ENCODE measurements at regions of chr19 and their contacts with region 1.

Region 1: DNA sequence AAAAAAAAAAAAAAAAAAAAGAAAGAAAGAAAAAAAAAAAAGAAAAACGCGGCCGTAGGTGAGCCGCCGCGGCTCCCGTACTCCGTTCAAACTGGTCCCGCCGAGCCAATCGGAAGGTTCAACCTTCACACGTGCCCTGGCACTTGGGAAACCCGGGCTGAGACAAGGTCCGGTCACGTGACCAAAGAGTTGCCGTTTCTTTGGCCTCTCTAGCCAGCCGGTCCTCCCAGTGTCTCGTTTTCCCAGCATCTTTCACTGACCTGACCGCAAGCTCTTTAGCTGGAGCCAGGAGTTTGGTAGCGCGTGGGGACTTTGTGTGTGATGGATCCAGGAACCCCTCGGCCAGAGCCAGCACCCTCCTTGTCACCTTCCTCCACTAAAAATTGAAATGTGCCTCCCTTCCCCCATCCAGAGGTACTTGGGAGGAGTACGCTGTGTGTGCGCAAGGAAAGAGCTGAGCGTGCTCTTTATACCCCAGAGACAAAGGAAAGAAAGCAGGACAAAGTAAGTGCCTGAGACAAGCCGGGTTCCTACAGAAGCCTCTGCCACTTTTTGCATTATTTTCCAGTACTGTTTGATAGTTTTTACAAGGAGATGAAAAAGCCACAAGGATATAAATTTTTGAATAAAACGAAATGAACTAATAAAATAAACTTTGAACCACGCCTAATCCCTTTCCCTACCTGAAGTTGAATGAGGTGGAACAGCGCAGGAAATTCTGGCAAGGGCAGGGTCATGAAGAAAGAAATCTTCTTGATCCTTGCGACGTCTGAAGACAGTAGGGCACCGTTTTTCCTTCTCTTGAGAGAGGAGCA is 959 bp downstream of the TNPO2 start:
- DNase-seq: peak; percentile 95
- H3K4me3 Mint-ChIP-seq: peak overlapping the region; percentile 92
- H3K27ac Mint-ChIP-seq: peak overlapping the region; percentile 85
- H3K4me1 Mint-ChIP-seq: peaks cover 41% of the 10 kb centered on the region
- H3K27me3 Mint-ChIP-seq: no peaks in the 10 kb centered on the region

Region 2: DNA sequence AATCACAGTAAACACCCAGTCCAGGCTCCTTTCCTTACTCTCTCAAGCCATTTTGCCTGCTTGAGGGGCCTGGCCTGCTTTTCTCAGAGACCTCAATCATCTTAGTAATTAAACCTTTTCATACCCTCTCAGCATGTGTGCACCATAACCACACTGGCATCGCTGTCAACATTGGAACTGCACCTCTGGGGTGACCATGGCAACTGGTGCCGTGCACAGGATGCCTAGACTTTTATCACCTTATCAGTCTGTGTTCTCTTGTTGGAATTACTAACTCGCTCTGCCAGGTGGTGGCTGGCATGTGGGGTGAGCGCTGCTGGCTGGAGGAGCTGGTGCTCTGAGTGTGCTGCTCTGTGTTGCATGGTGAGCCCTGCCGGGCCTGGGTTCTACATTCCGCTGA is 220.6 kb before region 1 on chr19:
- CTCF ChIA-PET with region 1: no interaction called
- POLR2A ChIA-PET with region 1: no interaction called
- DNase-seq: no peak
- H3K4me3 Mint-ChIP-seq: no peak overlapping the region
- H3K27ac Mint-ChIP-seq: no peak overlapping the region
- H3K4me1 Mint-ChIP-seq: no peaks in the 10 kb centered on the region
- H3K27me3 Mint-ChIP-seq: no peaks in the 10 kb centered on the region

Region 3: DNA sequence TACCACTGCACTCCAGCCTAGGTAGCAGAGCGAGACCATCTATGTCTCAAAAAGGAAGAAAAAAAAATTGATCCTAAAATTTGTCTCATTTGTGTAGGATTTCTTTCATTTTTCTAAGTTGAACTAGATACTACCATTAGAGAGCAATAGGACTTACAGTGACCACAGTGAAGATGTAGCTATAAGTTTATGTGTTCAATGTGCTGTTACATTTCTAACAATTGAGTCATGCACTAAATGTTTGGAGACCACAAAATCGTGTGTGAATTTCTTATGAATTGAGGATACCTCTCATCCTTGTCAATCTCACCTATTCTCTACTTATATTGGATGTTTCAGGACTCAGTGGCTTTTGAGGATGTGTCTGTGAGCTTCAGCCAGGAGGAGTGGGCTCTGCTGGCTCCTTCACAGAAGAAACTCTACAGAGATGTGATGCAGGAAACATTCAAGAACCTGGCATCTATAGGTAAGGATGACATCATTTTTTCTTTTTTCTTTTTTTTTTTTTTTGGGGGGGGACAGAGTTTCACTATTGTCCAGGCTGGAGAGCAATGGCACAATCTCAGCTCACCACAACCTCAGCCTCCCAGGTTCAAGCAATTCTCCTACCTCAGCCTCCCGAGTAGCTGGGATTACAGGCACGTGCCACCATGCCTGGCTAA is 99.3 kb before region 1 on chr19:
- CTCF ChIA-PET with region 1: no interaction called
- POLR2A ChIA-PET with region 1: no interaction called
- DNase-seq: no peak
- H3K4me3 Mint-ChIP-seq: no peak overlapping the region
- H3K27ac Mint-ChIP-seq: no peak overlapping the region
- H3K4me1 Mint-ChIP-seq: peaks cover 6% of the 10 kb centered on the region
- H3K27me3 Mint-ChIP-seq: no peaks in the 10 kb centered on the region

Region 4: DNA sequence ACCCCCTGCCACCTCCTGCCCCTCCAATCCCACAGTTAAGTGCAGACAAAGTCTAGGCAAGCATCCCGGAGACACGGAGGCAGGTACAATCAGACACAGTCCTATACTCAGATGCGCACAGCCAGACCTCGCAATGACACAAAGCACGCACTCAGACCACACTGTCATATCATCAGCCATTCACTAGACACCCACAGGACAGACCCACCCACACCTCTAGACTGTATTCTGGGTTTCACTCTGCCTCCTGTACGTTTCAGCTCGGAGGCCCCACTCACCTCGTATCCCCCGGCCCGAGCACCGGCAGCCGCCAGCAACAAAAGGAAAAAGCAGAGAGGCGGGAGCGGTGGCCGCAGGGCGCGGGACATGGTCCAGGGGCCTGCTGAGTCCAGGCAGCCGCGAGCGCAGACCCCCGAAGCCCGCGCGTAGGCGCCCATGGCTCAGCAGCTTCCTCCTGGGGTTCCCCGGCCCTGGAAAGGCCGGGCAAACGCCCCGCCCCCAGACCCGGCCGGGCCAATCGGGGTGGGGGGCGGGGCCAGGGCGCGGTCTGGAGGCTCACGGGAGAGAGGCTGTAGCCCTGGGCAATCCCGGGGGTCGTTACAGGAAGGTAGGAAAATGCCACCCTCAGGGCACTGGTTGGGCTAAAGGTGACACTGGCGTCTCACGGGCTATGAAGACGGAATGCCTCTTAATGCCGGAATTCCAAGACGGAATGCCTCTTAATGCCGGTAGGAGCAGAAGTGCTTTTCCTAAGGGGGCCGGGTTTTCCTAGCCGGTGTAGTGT is 56.3 kb before region 1 on chr19 and contains the starts of genes MAN2B1 and WDR83:
- CTCF ChIA-PET with region 1: no interaction called
- POLR2A ChIA-PET with region 1: interaction called, 14 read pairs
- DNase-seq: peak; percentile 80
- H3K4me3 Mint-ChIP-seq: peak within 1 kb of the TSS; percentile 92
- H3K27ac Mint-ChIP-seq: peak within 1 kb of the TSS; percentile 97
- H3K4me1 Mint-ChIP-seq: peaks cover 64% of the 10 kb centered on the region
- H3K27me3 Mint-ChIP-seq: no peaks in the 10 kb centered on the region
- total RNA-seq, gene MAN2B1: 146 to 150 TPM
- total RNA-seq, gene WDR83: 16.9 to 21.3 TPM

Region 5: GRCh38 chr19:12681074-12681951 is 41.5 kb before region 1 on chr19 and contains the start of gene DHPS:
- CTCF ChIA-PET with region 1: interaction called, 5 read pairs
- POLR2A ChIA-PET with region 1: interaction called, 11 read pairs
- DNase-seq: peak; percentile 94
- H3K4me3 Mint-ChIP-seq: peak within 1 kb of the TSS; percentile 94
- H3K27ac Mint-ChIP-seq: peak within 1 kb of the TSS; percentile 95
- H3K4me1 Mint-ChIP-seq: peaks cover 28% of the 10 kb centered on the region
- H3K27me3 Mint-ChIP-seq: no peaks in the 10 kb centered on the region
- total RNA-seq, gene DHPS: 106 to 113 TPM

Region 6: GRCh38 chr19:12696366-12697335 is 26.1 kb before region 1 on chr19 and contains the start of gene FBXW9:
- CTCF ChIA-PET with region 1: interaction called, 7 read pairs
- POLR2A ChIA-PET with region 1: interaction called, 27 read pairs
- DNase-seq: peak; percentile 97
- H3K4me3 Mint-ChIP-seq: peak within 1 kb of the TSS; percentile 89
- H3K27ac Mint-ChIP-seq: peak within 1 kb of the TSS; percentile 95
- H3K4me1 Mint-ChIP-seq: peaks cover 24% of the 10 kb centered on the region
- H3K27me3 Mint-ChIP-seq: no peaks in the 10 kb centered on the region
- total RNA-seq, gene FBXW9: 5.2 to 5.3 TPM

Region 7: GRCh38 chr19:12757544-12758274 is 34.9 kb after region 1 on chr19:
- CTCF ChIA-PET with region 1: interaction called, 24 read pairs
- POLR2A ChIA-PET with region 1: interaction called, 3 read pairs
- DNase-seq: peak; percentile 71
- H3K4me3 Mint-ChIP-seq: peak overlapping the region; percentile 49
- H3K27ac Mint-ChIP-seq: no peak overlapping the region
- H3K4me1 Mint-ChIP-seq: peaks cover 11% of the 10 kb centered on the region
- H3K27me3 Mint-ChIP-seq: peaks cover 4% of the 10 kb centered on the region

Region 8: GRCh38 chr19:12806239-12807081 is 83.7 kb after region 1 on chr19 and contains the start of gene RNASEH2A:
- CTCF ChIA-PET with region 1: no interaction called
- POLR2A ChIA-PET with region 1: interaction called, 12 read pairs
- DNase-seq: peak; percentile 92
- H3K4me3 Mint-ChIP-seq: peak within 1 kb of the TSS; percentile 95
- H3K27ac Mint-ChIP-seq: peak within 1 kb of the TSS; percentile 83
- H3K4me1 Mint-ChIP-seq: peaks cover 32% of the 10 kb centered on the region
- H3K27me3 Mint-ChIP-seq: no peaks in the 10 kb centered on the region
- total RNA-seq, gene RNASEH2A: 34.8 to 38.4 TPM

Region 9: DNA sequence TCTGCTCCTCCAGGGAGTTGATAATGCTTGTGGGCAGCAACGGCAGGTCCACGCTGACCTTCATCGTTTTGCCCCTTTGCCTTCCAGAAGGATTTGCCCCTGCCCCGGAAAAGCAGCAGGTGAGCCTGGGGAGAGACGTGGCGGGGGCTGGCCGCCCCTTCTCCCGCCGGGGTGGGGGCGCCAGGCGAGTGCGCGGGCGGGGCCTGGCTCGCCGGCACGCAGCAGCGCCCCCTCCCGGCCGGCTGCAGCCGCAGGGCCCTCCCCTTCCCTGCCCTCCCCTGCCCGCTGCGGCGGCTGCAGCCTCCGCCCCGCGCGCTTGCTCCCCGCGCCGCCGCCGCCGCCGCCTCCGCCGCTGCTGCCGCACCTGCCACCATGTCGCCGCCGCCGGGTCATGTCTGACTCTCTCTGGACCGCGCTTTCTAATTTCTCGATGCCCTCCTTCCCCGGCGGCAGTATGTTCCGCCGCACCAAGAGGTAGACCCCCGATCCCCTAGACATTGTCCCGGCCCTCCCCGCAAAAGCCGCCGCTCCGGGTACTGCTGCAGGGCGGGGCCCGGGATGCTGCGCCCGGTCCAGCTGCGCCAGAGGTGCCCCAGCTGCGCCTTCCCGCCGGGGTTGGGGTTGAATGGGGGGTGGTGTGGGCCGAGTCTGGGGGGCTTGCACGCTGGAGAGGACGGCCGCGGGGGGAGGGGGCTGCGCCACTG is 115.6 kb after region 1 on chr19 and contains the start of gene MAST1:
- CTCF ChIA-PET with region 1: no interaction called
- POLR2A ChIA-PET with region 1: no interaction called
- DNase-seq: peak; percentile 61
- H3K4me3 Mint-ChIP-seq: peak within 1 kb of the TSS; percentile 51
- H3K27ac Mint-ChIP-seq: no peak within 1 kb of the TSS
- H3K4me1 Mint-ChIP-seq: peaks cover 41% of the 10 kb centered on the region
- H3K27me3 Mint-ChIP-seq: peaks cover 76% of the 10 kb centered on the region
- total RNA-seq, gene MAST1: 1.1 to 2.1 TPM

Measured in activated CD4-positive, alpha-beta memory T cell treated with anti-CD3 and anti-CD28 coated beads, Interleukin-2, amount 10 ng/mL, durations not matched to agents 7 days and 5 days (primary cell).